ENCODE measurements at regions of chr5 and their contacts with region 1.

Region 1: GRCh38 chr5:20050262-20050661 is 62.3 kb upstream of the CDH18 start:
- DNase-seq: no peak
- H3K4me3 ChIP-seq: no peak overlapping the region
- H3K27ac ChIP-seq: no peak overlapping the region
- H3K4me1 ChIP-seq: no peaks in the 10 kb centered on the region
- H3K27me3 ChIP-seq: no peaks in the 10 kb centered on the region
- CTCF ChIP-seq: no peak

Region 2: DNA sequence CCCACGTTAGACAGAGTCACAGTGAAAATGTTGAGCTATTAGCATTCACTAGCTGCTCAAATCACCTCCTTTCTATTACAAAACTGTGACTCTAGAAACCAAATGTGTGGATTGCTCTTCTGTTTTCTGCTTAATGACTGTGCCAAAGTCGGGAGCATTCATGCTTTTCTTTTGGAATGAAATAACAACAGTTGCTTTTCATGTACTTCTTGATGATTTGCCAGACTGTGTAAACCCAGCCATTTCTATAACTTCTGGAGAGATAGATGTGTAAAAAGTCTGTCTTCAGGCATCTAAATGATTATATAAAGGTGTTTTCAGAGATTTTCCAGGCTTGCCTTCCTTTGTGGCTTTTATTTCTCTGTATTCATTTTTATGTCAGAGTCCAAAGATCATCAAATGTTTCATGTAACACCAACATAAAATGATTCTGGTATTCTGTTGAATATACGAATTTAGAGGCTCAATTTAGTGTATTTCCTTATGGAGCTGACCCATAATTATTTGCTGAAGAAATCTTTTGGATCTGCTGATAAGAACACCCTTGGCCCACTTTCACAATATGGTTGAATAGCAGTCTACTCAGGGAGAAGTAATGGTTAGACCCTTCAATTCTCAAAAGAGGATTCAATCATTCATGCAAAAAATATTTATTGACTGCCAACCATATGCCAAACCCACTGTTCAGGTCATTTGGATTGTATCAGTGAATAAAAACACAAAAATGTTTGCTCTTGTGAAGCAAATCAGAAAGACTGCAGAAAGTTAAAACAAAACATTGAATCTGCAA is 643.5 kb before region 1 on chr5:
- intact Hi-C with region 1: loop called (anchors 5 kb)
- DNase-seq: no peak
- H3K4me3 ChIP-seq: no peak overlapping the region
- H3K27ac ChIP-seq: no peak overlapping the region
- H3K4me1 ChIP-seq: no peaks in the 10 kb centered on the region
- H3K27me3 ChIP-seq: no peaks in the 10 kb centered on the region
- CTCF ChIP-seq: no peak

Region 3: GRCh38 chr5:20023686-20024326 is 26.5 kb before region 1 on chr5:
- intact Hi-C with region 1: no loop called
- DNase-seq: no peak
- H3K4me3 ChIP-seq: no peak overlapping the region
- H3K27ac ChIP-seq: no peak overlapping the region
- H3K4me1 ChIP-seq: no peaks in the 10 kb centered on the region
- H3K27me3 ChIP-seq: no peaks in the 10 kb centered on the region
- CTCF ChIP-seq: no peak

Measured in tibial artery (tissue), 4 donors.